Caco-2 (cell line): ENCODE measurements at regions of chr20 and their contacts with region 1.

Region 1: GRCh38 chr20:47379433-47380150 is 23.1 kb upstream of the ZMYND8 start:
- DNase-seq: no peak
- H3K4me3 ChIP-seq: no peak overlapping the region
- H3K4me3 Mint-ChIP-seq: no peak overlapping the region
- H3K27ac Mint-ChIP-seq: peak overlapping the region; percentile 2
- H3K4me1 ChIP-seq: peaks cover 15% of the 10 kb centered on the region
- H3K4me1 Mint-ChIP-seq: peaks cover 18% of the 10 kb centered on the region
- H3K27me3 ChIP-seq: no peaks in the 10 kb centered on the region
- H3K27me3 Mint-ChIP-seq: no peaks in the 10 kb centered on the region
- CTCF ChIP-seq: no peak

Region 2: GRCh38 chr20:47205577-47206498 is 173.8 kb before region 1 on chr20:
- CTCF ChIA-PET with region 1: interaction called, 49 read pairs
- POLR2A ChIA-PET with region 1: interaction called, 3 read pairs
- intact Hi-C with region 1: no loop called
- DNase-seq: peak; percentile 80 to 87
- H3K4me3 ChIP-seq: no peak overlapping the region
- H3K4me3 Mint-ChIP-seq: no peak overlapping the region
- H3K27ac Mint-ChIP-seq: peak overlapping the region; percentile 63
- H3K4me1 ChIP-seq: peaks cover 20% of the 10 kb centered on the region
- H3K4me1 Mint-ChIP-seq: peaks cover 39% of the 10 kb centered on the region
- H3K27me3 ChIP-seq: no peaks in the 10 kb centered on the region
- H3K27me3 Mint-ChIP-seq: no peaks in the 10 kb centered on the region
- CTCF ChIP-seq: peak; percentile 81

Region 3: DNA sequence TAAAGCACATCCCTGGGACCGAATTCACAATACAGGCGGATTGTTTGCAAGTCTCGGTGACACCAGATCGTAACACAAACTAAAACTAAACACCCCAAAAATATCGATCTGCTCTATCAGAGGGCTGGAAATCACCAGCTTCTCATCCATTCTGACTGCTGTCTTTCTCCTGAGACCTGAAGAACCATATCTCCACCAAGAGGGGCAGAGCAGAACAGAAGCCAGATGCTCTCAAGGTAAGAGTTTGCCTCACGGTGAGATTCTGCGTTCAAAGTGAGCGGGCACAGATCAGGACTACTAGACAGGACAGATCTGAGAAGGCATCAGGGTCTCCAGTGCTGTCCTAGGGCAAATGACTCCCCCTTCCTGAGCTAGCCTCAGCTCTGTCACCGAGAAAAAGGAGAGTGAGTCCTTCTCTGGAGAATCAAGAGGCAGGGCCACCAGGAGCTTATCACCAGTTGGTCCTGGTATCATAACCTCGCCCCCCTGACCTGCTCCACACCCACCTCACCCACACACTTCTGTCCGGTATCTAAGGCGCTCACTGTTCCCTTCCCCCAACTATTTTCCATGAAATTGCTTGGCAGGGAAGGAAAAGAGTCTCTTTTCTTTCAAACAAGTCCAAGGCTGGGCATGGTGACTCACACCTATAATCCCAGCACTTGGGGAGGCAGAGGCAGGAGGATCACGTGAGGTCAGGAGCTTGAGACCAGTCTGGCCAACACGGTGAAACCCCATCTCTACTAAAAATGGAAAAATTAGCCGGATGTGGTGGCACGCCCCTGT is 100.8 kb before region 1 on chr20:
- CTCF ChIA-PET with region 1: interaction called, 261 read pairs
- POLR2A ChIA-PET with region 1: interaction called, 11 read pairs
- intact Hi-C with region 1: loop called (anchors 1 kb)
- DNase-seq: peak in 1 of 2 experiments; percentile 35
- H3K4me3 ChIP-seq: no peak overlapping the region
- H3K4me3 Mint-ChIP-seq: no peak overlapping the region
- H3K27ac Mint-ChIP-seq: peak overlapping the region; percentile 27
- H3K4me1 ChIP-seq: peaks cover 24% of the 10 kb centered on the region
- H3K4me1 Mint-ChIP-seq: peaks cover 32% of the 10 kb centered on the region
- H3K27me3 ChIP-seq: no peaks in the 10 kb centered on the region
- H3K27me3 Mint-ChIP-seq: no peaks in the 10 kb centered on the region
- CTCF ChIP-seq: no peak

Region 4: DNA sequence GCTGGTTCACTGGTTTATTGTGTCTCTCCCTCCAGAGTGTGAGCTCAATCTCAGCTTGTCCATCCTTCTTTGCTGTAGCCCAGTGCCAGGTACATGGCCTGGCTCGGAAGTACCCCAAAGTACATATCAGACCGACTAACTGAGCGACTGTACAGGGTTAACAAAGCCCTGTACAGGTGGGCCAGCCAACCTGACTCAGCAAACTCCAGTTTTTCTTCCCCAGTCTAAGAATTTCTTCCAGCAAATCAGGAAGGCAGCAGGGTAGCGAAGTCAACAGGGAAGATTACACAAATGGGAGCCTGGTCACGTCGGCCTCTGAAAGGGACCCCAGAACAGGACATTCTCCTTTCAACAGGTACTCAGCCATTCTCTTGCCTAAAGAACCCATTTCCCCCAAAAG is 54.4 kb before region 1 on chr20:
- CTCF ChIA-PET with region 1: interaction called, 23 read pairs
- POLR2A ChIA-PET with region 1: interaction called, 6 read pairs
- intact Hi-C with region 1: no loop called
- DNase-seq: no peak
- H3K4me3 ChIP-seq: no peak overlapping the region
- H3K4me3 Mint-ChIP-seq: peak overlapping the region; percentile 7
- H3K27ac Mint-ChIP-seq: peak overlapping the region; percentile 97
- H3K4me1 ChIP-seq: peaks cover 76% of the 10 kb centered on the region
- H3K4me1 Mint-ChIP-seq: peaks cover 51% of the 10 kb centered on the region
- H3K27me3 ChIP-seq: no peaks in the 10 kb centered on the region
- H3K27me3 Mint-ChIP-seq: no peaks in the 10 kb centered on the region
- CTCF ChIP-seq: no peak

Region 5: GRCh38 chr20:47356526-47357295 is 22.9 kb before region 1 on chr20 and contains the start of gene ZMYND8:
- CTCF ChIA-PET with region 1: interaction called, 306 read pairs
- POLR2A ChIA-PET with region 1: interaction called, 114 read pairs
- intact Hi-C with region 1: loop called (anchors 1 kb)
- DNase-seq: peak; percentile 98 to 100
- H3K4me3 ChIP-seq: peak within 1 kb of the TSS; percentile 40
- H3K4me3 Mint-ChIP-seq: peak within 1 kb of the TSS; percentile 95
- H3K27ac Mint-ChIP-seq: peak within 1 kb of the TSS; percentile 100
- H3K4me1 ChIP-seq: peaks cover 68% of the 10 kb centered on the region
- H3K4me1 Mint-ChIP-seq: peaks cover 73% of the 10 kb centered on the region
- H3K27me3 ChIP-seq: no peaks in the 10 kb centered on the region
- H3K27me3 Mint-ChIP-seq: no peaks in the 10 kb centered on the region
- CTCF ChIP-seq: no peak
- total RNA-seq, gene ZMYND8: 180 and 194 TPM in 2 replicates

Region 6: DNA sequence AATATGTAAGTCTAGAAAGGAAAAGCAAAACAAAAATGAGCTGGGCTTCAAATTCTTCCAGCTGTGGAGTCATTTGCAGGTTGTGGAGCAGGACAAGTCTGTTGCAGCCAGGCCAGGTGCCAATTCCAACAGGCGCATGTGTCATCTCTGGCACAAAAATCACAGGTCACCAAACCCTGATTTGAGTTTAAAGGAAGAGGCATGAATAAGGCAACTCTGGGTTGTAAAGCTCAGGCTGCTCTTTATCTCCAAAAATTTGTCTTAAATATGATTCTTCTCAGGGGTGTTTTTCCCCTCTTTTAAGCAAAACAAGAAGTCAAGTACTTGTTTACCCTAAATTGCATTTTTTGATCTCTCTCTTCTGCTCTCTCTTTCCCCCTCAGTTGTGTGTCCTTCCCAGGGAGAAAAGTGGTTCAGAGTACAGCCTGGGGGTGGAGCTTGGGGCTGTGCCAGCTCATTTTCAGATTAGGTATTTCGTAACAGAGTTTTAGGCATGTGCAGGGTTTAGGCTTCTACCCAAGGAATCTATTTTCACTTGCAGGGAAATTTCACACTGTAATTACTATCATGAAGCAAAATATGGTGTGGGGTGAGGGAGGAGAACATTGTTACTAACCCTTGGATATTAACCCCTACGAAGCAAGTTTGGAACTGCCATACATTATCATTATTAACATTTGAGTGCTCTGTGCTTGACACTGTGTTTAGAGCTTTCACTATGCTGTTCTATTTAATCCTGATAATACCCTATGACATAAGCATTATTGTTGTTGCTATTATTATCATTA is 113.8 kb after region 1 on chr20:
- CTCF ChIA-PET with region 1: interaction called, 10 read pairs
- POLR2A ChIA-PET with region 1: interaction called, 4 read pairs
- intact Hi-C with region 1: no loop called
- DNase-seq: peak; percentile 86
- H3K4me3 ChIP-seq: peak overlapping the region; percentile 11; the same call in 1 of the 2 replicates
- H3K4me3 Mint-ChIP-seq: peak overlapping the region; percentile 54
- H3K27ac Mint-ChIP-seq: peak overlapping the region; percentile 48
- H3K4me1 ChIP-seq: peaks cover 23% of the 10 kb centered on the region
- H3K4me1 Mint-ChIP-seq: peaks cover 25% of the 10 kb centered on the region
- H3K27me3 ChIP-seq: no peaks in the 10 kb centered on the region
- H3K27me3 Mint-ChIP-seq: no peaks in the 10 kb centered on the region
- CTCF ChIP-seq: peak in 1 of 2 experiments; percentile 7